ENCODE measurements at regions of chr14 and their contacts with region 1.

Region 1: GRCh38 chr14:68788996-68789820 is 3.7 kb downstream of the ZFP36L1 start:
- DNase-seq: peak; percentile 75
- CTCF ChIP-seq: peak; percentile 84

Region 2: GRCh38 chr14:68775143-68776126 is 13.8 kb before region 1 on chr14:
- CTCF ChIA-PET with region 1: interaction called, 17 read pairs
- POLR2A ChIA-PET with region 1: interaction called, 4 read pairs
- DNase-seq: no peak
- CTCF ChIP-seq: no peak

Region 3: DNA sequence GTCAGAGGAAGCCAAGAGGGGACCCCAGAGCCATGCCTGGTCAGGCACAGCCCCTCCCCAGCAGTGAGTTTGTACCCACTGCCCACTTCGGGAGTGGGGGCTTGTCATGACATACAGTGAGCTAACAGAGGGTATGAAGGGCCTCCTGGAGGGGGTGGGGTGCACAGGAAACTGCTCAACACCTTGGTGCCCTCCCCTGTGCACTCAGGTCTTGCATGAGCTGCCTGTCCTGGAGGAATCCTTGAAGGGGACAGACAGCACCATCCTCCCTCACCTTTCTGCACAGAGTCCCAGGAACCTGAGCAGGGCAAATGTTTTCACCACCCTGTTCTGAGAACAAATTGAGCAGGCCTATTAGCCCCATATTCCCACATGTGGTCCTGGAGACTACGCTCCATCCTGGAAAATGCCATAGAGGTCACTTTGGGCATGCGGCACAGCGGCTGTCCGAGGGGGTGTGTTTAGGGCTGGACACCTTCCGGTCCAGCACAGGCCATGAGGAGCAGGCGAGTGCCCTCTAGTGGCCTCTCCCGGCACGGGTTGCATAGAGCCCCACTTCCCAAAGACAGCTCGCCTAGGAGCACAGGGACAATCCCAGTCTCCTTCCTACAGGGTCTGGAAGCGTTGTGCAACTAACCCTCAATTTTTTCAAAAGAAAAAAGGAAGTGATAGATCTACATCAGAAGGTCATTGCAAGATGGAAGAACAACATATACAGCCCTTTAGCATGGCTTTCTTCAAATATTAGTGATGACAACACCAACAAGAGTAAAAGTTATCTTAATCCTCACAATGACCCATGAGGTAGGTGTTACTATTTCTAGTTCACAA is 35.5 kb after region 1 on chr14:
- CTCF ChIA-PET with region 1: interaction called, 84 read pairs
- POLR2A ChIA-PET with region 1: interaction called, 3 read pairs
- DNase-seq: peak; percentile 58
- CTCF ChIP-seq: peak; percentile 91